ENCODE measurements at regions of chr12 and their contacts with region 1.

Region 1: GRCh38 chr12:76337583-76337982 is 10.6 kb downstream of the BBS10 start:
- DNase-seq: no peak

Region 2: DNA sequence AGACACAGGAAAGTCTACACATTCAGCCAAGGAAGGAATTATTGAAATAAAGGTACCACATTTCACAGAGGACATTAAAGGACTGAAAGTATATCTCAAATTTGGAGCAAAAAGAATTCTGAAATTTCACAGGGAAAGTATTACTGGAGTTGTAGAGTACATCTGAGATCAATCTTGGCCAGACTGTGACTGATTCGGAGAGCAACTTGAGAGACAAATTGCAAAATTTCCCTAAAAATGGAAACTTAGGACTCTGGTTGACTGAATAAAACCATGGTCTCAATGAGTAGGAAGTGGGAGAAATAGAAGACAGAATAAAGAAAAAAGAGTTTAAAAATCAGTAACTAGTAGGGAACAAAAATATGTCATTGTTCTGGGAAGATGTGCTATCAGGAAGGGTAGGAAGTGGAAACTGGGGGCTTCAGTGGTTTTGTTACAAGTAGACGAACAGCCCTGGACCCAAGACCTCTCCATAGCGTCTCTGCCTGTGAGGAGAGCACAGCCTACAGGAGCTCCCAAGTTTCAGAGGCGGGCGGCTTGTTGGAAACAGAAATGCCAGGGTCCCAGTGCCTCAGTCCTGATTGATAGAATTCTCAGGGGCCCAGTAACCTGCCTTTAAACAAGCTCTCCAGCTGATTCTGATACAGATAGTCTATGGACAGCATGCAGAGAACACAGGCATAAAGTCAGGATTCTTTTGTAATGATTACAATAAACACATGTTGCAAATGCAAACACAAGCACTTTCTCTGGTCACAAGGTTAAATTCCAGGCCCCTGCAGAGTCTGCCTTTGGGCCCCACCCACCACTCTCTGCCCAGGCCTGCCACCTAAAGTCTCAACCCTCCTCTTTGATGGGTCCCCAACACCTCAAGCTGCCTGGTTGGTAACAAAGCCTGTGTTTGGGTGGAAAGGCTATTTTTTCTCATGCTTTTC is 52.5 kb before region 1 on chr12:
- intact Hi-C with region 1: loop called (anchors 10 kb)
- DNase-seq: no peak

Measured in posterior cingulate gyrus (tissue), 11 donors.